ENCODE measurements at regions of chr17 and their contacts with region 1.

Region 1: DNA sequence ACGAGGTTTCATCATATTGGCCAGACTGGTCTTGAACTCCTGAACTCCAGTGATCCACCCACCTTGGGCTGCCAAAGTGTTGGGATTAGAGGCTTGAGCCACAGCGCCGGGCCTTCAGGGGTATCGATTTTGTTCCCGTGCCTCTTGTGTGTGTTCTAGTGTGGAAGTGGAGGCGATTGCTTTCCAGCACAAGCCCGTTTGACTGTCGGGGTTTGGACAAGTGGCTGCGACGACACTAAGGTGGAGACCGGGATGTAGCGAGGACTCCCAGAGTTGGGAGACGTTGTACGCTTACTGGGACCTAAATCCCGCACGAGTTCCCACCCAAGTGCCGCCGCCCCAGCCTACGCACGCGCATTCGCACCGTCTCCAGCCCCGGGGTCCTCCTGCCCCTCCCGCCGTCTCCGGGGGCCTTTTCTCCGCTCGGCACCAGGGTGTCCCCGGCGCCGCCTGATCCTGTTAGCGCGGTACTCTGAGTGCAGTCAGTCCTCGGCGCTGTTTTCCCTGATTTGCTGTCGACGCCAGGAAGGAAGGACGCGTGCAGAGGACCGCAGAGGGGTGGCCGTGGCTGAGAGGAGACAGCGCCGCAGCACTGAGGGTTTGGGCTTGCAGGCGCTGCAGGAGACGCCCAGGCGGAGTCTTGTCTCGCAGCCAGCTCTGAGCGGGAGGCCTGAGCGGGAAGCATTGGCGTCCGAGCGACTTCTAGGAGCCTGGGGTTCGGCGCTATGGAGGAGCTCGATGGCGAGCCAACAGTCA is at the start of gene NUP85:
- H3K4me3 ChIP-seq: peak within 1 kb of the TSS; percentile 98
- H3K27ac ChIP-seq: peak within 1 kb of the TSS; percentile 99
- H3K4me1 ChIP-seq: no peaks in the 10 kb centered on the region
- CTCF ChIP-seq: peak; percentile 96

Region 2: GRCh38 chr17:74883041-74883745 is 322.0 kb before region 1 on chr17:
- CTCF ChIA-PET with region 1: no interaction called
- POLR2A ChIA-PET with region 1: no interaction called
- H3K4me3 ChIP-seq: no peak overlapping the region
- H3K27ac ChIP-seq: no peak overlapping the region
- H3K4me1 ChIP-seq: no peaks in the 10 kb centered on the region; the same call in 1 of the 2 replicates
- CTCF ChIP-seq: no peak

Region 3: GRCh38 chr17:74981979-74982662 is 223.1 kb before region 1 on chr17:
- CTCF ChIA-PET with region 1: interaction called, 3 read pairs
- POLR2A ChIA-PET with region 1: interaction called, 12 read pairs
- H3K4me3 ChIP-seq: peak overlapping the region; percentile 56
- H3K27ac ChIP-seq: peak overlapping the region; percentile 79
- H3K4me1 ChIP-seq: peaks cover 3% of the 10 kb centered on the region; the same call in 1 of the 2 replicates
- CTCF ChIP-seq: peak; percentile 80; the same call in 1 of the 2 replicates

Region 4: DNA sequence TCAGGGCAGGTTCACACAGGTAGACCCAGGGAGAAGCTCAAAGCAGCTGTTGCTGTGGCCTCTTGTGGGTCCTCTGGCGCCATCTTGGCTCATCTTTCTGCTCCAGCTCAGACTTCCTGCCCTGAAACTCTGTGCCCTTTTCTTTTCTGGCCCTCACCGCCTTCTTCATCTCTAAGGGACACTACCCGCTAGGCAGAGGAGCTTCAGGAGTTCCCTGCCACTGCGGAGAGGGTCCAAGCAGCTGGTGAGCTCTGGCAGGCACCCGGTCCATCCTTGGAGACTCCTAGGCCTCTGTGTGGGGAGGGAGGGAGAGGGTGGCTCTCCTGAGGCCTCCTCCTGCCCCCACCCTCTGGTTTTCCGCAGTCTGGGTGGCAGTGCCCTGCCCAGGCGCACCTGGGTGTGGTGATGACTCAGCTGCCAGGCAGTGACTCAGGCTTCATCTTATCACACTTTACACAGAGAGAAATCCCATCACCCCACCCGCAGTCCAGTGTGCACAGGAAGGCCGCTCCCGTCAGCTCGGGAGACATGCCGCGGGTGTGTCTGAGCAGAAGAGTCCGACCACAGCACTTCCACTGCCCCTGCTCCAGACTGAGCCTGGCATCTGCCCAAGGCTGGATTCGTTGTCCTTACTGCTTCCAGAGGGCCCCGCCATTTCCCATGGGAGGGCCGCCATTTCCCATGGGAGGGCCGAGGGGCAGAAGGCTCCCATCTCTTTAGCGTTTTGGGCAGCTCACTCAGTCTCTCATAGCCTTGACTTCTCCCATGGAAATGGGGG is 81.0 kb before region 1 on chr17:
- CTCF ChIA-PET with region 1: interaction called, 11 read pairs
- POLR2A ChIA-PET with region 1: interaction called, 6 read pairs
- H3K4me3 ChIP-seq: no peak overlapping the region
- H3K27ac ChIP-seq: peak overlapping the region; percentile 32; the same call in 1 of the 2 replicates
- H3K4me1 ChIP-seq: 0 out of 2 replicates have a peak, but pooled peaks cover 4% of the 10 kb centered on the region
- CTCF ChIP-seq: no peak

Region 5: DNA sequence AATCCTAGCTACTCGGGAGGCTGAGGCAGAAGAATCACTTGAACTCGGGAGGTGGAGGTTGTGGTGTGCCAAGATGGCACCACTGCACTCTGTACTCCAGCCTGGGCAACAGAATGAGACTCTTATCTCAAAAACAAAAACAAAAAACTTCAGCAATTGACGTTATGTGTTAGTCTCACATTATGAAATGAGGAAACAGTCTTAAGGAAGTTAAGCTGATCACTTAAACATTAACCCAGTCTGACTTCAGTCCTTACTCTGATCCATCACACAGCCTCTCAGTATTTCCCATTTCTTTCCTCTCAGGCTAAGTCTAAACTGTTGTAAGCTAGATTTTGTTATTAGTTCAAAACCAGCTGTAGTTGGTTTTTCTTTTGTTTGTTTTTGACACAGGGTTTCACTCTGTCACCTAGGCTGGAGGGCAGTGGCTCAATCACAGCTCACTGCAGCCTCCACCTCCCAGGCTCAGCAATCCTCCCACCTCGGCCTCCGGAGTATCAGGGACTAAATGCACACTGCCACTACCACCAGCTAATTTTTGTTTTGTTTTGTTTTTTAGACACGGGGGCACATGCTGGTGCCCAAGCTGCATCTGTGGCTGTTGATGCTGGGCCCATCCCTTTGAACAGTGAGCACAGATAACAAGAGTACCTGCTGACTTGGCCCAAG is 57.2 kb before region 1 on chr17:
- CTCF ChIA-PET with region 1: interaction called, 10 read pairs
- POLR2A ChIA-PET with region 1: interaction called, 4 read pairs
- H3K4me3 ChIP-seq: no peak overlapping the region
- H3K27ac ChIP-seq: no peak overlapping the region
- H3K4me1 ChIP-seq: peaks cover 4% of the 10 kb centered on the region; the same call in 1 of the 2 replicates
- CTCF ChIP-seq: no peak

Region 6: DNA sequence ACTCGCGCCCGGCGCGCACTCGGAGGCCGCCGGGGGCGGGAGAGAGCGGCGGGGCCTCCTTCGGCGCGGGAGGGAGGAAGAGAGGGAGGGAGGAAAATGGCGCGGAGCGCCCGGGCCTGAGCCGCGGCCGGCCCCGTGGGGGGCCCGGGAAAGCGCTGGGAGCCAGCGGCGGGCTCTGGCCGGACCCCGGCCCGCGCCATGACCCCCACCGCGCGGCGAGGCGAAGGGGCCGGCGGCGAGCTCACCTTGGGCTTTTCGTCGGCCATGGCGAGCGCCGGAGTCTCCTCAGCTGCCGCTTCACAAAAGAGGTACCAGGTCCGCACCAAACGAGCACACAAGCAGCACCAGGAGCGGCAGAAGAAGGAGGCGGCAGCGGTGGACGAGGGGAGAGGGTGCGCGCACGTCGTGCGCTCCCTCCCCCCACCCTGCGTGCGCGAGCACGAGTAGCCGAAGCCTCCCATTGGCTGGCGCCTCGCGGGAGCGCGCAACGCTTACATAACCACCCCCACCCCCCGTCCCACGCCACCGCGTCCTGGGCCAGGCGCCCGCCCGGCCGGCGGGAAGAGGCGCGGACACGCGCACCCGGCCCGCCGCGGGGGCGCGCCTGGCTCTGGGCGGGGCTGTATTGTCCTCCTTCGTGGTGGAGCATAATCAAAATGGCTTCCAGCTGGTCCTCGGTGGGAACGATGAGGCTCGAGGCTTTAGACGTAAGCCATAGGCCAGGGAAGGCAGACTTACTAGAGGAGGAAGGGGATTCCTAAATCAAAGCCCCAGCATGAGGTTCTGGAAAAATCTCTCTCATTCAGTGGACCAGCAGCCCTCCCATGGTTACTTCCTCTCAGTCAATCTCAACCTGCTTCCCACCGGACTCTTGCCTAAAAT is 22.4 kb before region 1 on chr17 and contains the start of gene SUMO2:
- CTCF ChIA-PET with region 1: interaction called, 49 read pairs
- POLR2A ChIA-PET with region 1: interaction called, 6 read pairs
- H3K4me3 ChIP-seq: peak within 1 kb of the TSS; percentile 56
- H3K27ac ChIP-seq: peak within 1 kb of the TSS; percentile 95
- H3K4me1 ChIP-seq: peaks cover 5% of the 10 kb centered on the region; the same call in 1 of the 2 replicates
- CTCF ChIP-seq: no peak